Astrocyte of the spinal cord (primary cell): ENCODE measurements at regions of chr15 and their contacts with region 1.

Region 1: GRCh38 chr15:101251830-101252820 is at the start of gene CHSY1:
- DNase-seq: peak; percentile 97
- H3K4me3 ChIP-seq: peak within 1 kb of the TSS; percentile 71
- CTCF ChIP-seq: no peak

Region 2: GRCh38 chr15:101127506-101128076 is 124.5 kb before region 1 on chr15:
- in situ Hi-C with region 1: loop called (anchors 10 kb)
- DNase-seq: peak; percentile 99
- H3K4me3 ChIP-seq: no peak overlapping the region
- CTCF ChIP-seq: no peak

Region 3: DNA sequence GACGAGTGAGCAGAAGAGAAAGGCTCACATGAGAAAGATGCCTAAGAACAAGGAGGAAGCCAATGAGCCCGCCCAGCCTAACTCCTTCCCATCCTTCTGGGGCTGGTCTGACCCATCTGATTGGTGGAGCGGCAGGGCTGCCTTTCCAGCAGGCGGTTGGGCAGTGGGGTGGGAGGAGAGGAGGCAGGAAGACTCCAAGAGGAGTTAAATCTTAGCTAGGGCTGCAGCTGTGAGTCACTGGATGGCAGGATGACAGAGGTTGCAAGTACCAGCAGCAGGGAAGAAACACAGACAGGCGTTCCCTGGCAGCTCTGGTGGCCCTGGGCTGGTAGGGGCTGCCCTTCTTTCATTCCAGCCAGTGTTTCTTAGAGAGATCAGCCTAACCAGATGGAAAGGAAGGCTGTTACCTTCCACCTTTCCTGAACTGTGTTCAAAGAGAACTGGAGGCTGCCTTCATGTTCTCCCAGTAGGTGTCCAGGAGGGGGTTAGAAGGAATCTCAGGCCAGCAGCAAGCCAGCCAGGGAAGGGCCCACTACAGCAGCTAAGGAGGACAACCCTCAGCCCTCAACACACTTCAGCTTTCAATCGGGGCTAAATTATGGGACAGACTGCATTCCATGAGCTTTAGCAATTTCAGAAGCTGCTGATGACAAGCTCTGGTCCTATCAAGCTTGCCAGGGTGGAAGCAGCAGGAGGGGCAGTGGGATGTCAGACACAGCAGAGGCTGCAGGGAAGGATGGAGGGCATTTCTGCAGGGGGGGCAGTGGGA is 50.5 kb before region 1 on chr15:
- in situ Hi-C with region 1: no loop called
- DNase-seq: peak; percentile 99
- H3K4me3 ChIP-seq: no peak overlapping the region
- CTCF ChIP-seq: no peak

Region 4: DNA sequence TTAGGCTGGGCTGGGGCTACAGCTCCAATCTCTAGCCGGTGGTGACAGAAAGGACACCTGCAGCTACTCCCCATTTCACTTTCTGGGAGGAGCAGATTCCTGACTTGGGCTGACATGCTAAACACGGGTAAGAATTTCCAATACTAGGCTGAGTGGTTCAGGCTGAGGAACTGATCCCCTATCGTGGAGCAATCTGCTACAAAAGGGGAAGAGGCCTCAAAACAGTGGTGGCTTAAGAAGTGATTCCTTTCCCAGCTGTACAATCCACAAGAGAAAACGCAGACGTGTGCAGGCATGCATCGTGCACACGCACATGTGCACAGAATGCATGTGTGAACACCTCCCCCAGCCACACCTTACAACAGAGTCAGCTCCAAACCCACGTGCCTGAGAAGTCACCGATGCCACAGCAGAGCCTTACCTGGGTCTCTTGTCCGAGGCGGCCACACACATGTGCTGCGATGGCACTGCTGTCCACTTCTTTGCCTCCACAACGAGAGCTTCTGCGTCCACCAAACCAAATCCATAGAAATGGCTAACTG is 129.6 kb after region 1 on chr15:
- in situ Hi-C with region 1: no loop called
- DNase-seq: no peak
- H3K4me3 ChIP-seq: no peak overlapping the region
- CTCF ChIP-seq: no peak